T-cell (primary cell): ENCODE measurements at regions of chr3 and their contacts with region 1.

Region 1: GRCh38 chr3:138923531-138923994 is 23.4 kb downstream of the FOXL2 start:
- DNase-seq: peak; percentile 54 to 90 (median 80)
- ATAC-seq: peak; percentile 83 to 94 (median 87)
- H3K4me3 ChIP-seq: no peak overlapping the region
- H3K4me3 Mint-ChIP-seq: no peak overlapping the region
- H3K27ac ChIP-seq: no peak overlapping the region
- H3K27ac Mint-ChIP-seq: no peak overlapping the region
- H3K4me1 ChIP-seq: peaks cover 0 to 3% of the 10 kb centered on the region in 2 experiments
- H3K4me1 Mint-ChIP-seq: peaks cover 0 to 5% (median 0%) of the 10 kb centered on the region in 3 donors
- H3K27me3 ChIP-seq: peaks cover 0 to 26% of the 10 kb centered on the region in 2 experiments
- H3K27me3 Mint-ChIP-seq: peaks cover 4 to 13% of the 10 kb centered on the region in 2 donors

Region 2: GRCh38 chr3:138417559-138417982 is 506.0 kb before region 1 on chr3:
- CTCF ChIA-PET with region 1: interaction called, 16 to 31 read pairs
- POLR2A ChIA-PET with region 1: no interaction called
- DNase-seq: peak in 34 of 35 experiments; percentile 11 to 73 (median 44)
- ATAC-seq: peak; percentile 47 to 73 (median 58)
- H3K4me3 ChIP-seq: no peak overlapping the region
- H3K4me3 Mint-ChIP-seq: no peak overlapping the region
- H3K27ac ChIP-seq: no peak overlapping the region
- H3K27ac Mint-ChIP-seq: no peak overlapping the region
- H3K4me1 ChIP-seq: peaks cover 0 to 4% of the 10 kb centered on the region in 2 experiments
- H3K4me1 Mint-ChIP-seq: no peaks in the 10 kb centered on the region
- H3K27me3 ChIP-seq: peaks cover 0 to 28% of the 10 kb centered on the region in 2 experiments
- H3K27me3 Mint-ChIP-seq: peaks cover 4 to 23% of the 10 kb centered on the region in 2 donors

Region 3: GRCh38 chr3:138594150-138594934 is 329.2 kb before region 1 on chr3 and contains the start of gene CEP70:
- CTCF ChIA-PET with region 1: interaction called, 9 to 46 read pairs
- POLR2A ChIA-PET with region 1: no interaction called
- DNase-seq: peak; percentile 75 to 94 (median 89)
- ATAC-seq: peak; percentile 92 to 96 (median 94)
- H3K4me3 ChIP-seq: peak within 1 kb of the TSS; percentile 85 to 86
- H3K4me3 Mint-ChIP-seq: peak within 1 kb of the TSS; percentile 86 to 96 (median 89)
- H3K27ac ChIP-seq: peak within 1 kb of the TSS; percentile 94
- H3K27ac Mint-ChIP-seq: peak within 1 kb of the TSS; percentile 95 to 97
- H3K4me1 ChIP-seq: peaks cover 5 to 16% of the 10 kb centered on the region in 2 experiments
- H3K4me1 Mint-ChIP-seq: peaks cover 13 to 20% (median 13%) of the 10 kb centered on the region in 3 donors
- H3K27me3 ChIP-seq: no peaks in the 10 kb centered on the region
- H3K27me3 Mint-ChIP-seq: no peaks in the 10 kb centered on the region
- total RNA-seq, gene CEP70: 14.5 to 23.4 (median 21.7) TPM

Region 4: GRCh38 chr3:138694287-138695007 is 229.1 kb before region 1 on chr3:
- CTCF ChIA-PET with region 1: interaction called, 13 to 23 read pairs
- POLR2A ChIA-PET with region 1: interaction called in 1 of 2 experiments, 3 read pairs
- DNase-seq: no peak
- ATAC-seq: no peak
- H3K4me3 ChIP-seq: no peak overlapping the region
- H3K4me3 Mint-ChIP-seq: no peak overlapping the region
- H3K27ac ChIP-seq: no peak overlapping the region
- H3K27ac Mint-ChIP-seq: no peak overlapping the region
- H3K4me1 ChIP-seq: no peaks in the 10 kb centered on the region
- H3K4me1 Mint-ChIP-seq: no peaks in the 10 kb centered on the region
- H3K27me3 ChIP-seq: no peaks in the 10 kb centered on the region
- H3K27me3 Mint-ChIP-seq: no peaks in the 10 kb centered on the region

Region 5: GRCh38 chr3:138935848-138936740 is 12.5 kb after region 1 on chr3:
- CTCF ChIA-PET with region 1: interaction called, 20 to 45 read pairs
- POLR2A ChIA-PET with region 1: interaction called in 1 of 2 experiments, 11 read pairs
- DNase-seq: peak; percentile 24 to 81 (median 56)
- ATAC-seq: peak; percentile 78 to 86 (median 79)
- H3K4me3 ChIP-seq: peak overlapping the region; percentile 36 to 65
- H3K4me3 Mint-ChIP-seq: peak overlapping the region; percentile 62 to 83 (median 64)
- H3K27ac ChIP-seq: no peak overlapping the region
- H3K27ac Mint-ChIP-seq: no peak overlapping the region
- H3K4me1 ChIP-seq: peaks cover 3 to 46% of the 10 kb centered on the region in 2 experiments
- H3K4me1 Mint-ChIP-seq: peaks cover 33 to 41% (median 41%) of the 10 kb centered on the region in 3 donors
- H3K27me3 ChIP-seq: peaks cover 8 to 76% of the 10 kb centered on the region in 2 experiments
- H3K27me3 Mint-ChIP-seq: peaks cover 60 to 87% of the 10 kb centered on the region in 2 donors